HEK293 (cell line): ENCODE measurements at regions of chr19 and their contacts with region 1.

Region 1: DNA sequence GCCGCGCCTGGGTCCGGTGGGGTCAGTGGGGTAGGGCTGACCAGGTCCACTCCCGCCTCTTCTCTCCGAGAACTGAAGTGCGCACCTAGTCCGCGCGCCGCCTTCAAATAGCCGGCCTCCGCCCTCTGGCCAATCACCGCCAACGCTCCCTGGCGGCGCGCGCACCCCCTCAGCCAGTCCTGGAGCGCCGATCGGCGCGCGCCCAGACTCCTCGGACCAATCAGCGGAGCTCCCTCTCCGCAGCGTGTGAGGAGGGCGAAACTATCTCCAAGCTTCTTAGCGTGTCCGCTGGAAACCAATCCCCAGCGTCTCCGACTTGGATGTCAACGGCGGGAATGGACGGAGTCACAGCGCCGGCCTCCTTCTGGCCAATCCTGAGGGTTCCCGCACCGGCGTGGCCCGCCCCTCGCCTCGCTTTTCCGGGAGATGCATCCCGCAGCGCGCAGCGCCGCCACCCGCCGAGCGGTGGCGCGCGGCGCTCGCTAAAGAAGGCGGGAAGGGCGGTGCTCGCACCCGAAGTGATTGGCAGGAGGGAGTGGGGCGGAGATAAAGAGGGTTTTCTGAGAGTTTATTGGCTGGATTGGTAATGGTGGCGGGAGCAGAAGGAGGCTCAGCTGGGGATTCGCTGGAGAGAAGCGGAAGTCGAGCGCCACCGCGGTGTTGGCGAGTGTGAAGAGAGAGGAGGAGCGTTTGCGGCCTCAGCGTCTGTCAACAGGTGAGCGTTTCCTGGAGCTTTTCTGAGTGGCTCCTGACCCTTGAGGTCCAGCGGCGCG is at the start of gene ASF1B:
- H3K4me3 ChIP-seq: peak within 1 kb of the TSS; percentile 90
- H3K27ac ChIP-seq: peak within 1 kb of the TSS; percentile 85
- H3K4me1 ChIP-seq: no peaks in the 10 kb centered on the region
- CTCF ChIP-seq: peak; percentile 99

Region 2: DNA sequence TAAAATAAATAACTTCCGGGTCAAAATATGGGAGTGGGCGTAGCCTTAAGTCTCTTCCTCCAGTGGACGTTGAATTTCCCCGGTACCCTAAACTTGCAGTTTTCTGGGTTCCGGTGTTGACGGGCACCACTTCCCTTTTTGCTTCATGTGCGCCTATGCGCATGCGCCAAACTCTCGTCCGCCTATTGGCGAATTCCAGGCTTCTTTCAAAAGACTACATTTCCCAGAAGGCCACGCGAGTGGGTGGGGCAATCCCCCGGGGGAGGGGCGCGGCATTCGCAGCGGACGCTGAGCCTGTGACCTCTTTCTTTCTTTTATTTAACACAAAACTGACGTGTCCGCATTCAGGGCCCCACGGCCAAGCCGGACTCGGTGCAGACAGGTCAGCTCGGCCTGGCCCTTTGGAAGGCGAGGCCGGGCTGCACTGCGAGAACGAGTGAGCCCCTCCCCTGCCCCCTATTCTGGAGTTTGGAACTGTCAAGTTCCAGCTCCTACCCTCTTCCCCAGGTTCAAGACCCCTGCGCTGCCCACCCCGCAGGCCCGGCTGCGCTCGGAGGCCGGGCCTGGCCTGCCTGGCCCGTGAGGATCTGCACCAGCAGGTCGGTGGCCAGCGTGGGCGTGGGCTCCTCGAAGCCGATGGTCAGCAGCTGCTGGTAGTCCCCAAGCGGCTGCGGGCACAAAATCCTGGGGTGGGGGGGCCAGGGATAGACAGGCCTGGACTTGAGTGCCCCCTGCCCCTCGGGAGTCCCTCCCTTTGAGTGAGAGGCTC is 55.2 kb before region 1 on chr19:
- CTCF ChIA-PET with region 1: interaction called, 15 read pairs
- POLR2A ChIA-PET with region 1: interaction called, 11 read pairs
- H3K4me3 ChIP-seq: peak overlapping the region; percentile 73
- H3K27ac ChIP-seq: no peak overlapping the region; the same call in 1 of the 2 replicates
- H3K4me1 ChIP-seq: no peaks in the 10 kb centered on the region; the same call in 1 of the 2 replicates
- CTCF ChIP-seq: 0 out of 2 replicates have a peak, but pooled peaks have one; percentile 12

Region 3: GRCh38 chr19:14147797-14148605 is 11.3 kb after region 1 on chr19:
- CTCF ChIA-PET with region 1: interaction called, 26 read pairs
- POLR2A ChIA-PET with region 1: interaction called, 14 read pairs
- H3K4me3 ChIP-seq: no peak overlapping the region
- H3K27ac ChIP-seq: no peak overlapping the region
- H3K4me1 ChIP-seq: no peaks in the 10 kb centered on the region
- CTCF ChIP-seq: peak; percentile 66

Region 4: GRCh38 chr19:14310055-14310454 is 173.4 kb after region 1 on chr19:
- CTCF ChIA-PET with region 1: no interaction called
- POLR2A ChIA-PET with region 1: no interaction called
- H3K4me3 ChIP-seq: no peak overlapping the region
- H3K27ac ChIP-seq: no peak overlapping the region
- H3K4me1 ChIP-seq: no peaks in the 10 kb centered on the region
- CTCF ChIP-seq: no peak

Region 5: GRCh38 chr19:14472202-14472938 is 335.7 kb after region 1 on chr19:
- CTCF ChIA-PET with region 1: interaction called, 11 read pairs
- POLR2A ChIA-PET with region 1: interaction called, 8 read pairs
- H3K4me3 ChIP-seq: no peak overlapping the region
- H3K27ac ChIP-seq: no peak overlapping the region
- H3K4me1 ChIP-seq: no peaks in the 10 kb centered on the region; the same call in 1 of the 2 replicates
- CTCF ChIP-seq: peak; percentile 69